IMR-90 (cell line): ENCODE measurements at regions of chr19 and their contacts with region 1.

Region 1: DNA sequence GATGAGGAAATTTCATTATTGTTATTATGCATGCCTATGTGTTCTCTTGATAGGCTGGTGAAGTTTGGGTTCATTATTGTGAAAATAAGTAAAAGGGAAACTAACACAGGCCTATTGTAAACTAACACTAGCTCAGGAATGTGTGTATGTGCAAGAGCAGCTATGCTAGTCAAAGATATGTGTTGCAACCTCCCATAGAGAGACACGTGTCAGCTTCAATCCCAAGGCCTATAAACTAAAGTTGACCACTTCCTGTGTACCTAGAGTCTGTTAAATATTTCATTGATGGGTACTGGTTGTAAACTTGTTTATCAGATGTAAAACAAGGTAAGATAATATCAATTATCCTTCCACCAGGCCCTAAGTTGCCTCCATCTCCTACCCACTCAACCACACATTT is 44.7 kb upstream of the ZNF30 start:
- DNase-seq: peak; percentile 24
- ATAC-seq: peak; percentile 64
- H3K4me3 ChIP-seq: no peak overlapping the region
- H3K27ac ChIP-seq: no peak overlapping the region
- H3K4me1 ChIP-seq: no peaks in the 10 kb centered on the region
- H3K27me3 ChIP-seq: no peaks in the 10 kb centered on the region
- CTCF ChIP-seq: no peak
- POLR2A ChIP-seq: no peak
- RAD21 ChIP-seq: no peak

Region 2: DNA sequence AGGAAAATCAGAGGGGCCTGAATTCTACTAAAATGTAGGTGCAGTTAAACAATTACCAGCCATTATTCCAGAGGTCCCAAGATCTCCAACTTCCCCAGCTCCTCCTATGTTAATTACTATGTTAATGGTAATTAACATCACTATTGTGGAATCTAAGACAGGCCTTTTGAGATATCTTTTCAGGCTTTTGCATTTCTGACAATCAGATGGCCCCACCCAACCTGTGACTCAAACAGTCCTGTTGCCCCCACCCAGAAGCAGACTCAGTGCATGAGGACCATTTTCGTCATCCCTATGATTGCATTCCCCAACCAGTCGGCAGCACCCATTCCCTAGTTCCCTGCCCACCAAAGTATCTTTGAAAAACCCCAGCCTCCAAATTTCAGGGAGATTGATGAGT is 36.2 kb after region 1 on chr19:
- CTCF ChIA-PET with region 1: no interaction called
- POLR2A ChIA-PET with region 1: no interaction called
- dilution Hi-C with region 1: no loop called
- in situ Hi-C with region 1: no loop called
- intact Hi-C with region 1: loop called (anchors 5 kb)
- DNase-seq: no peak
- ATAC-seq: no peak
- H3K4me3 ChIP-seq: no peak overlapping the region
- H3K27ac ChIP-seq: no peak overlapping the region
- H3K4me1 ChIP-seq: no peaks in the 10 kb centered on the region
- H3K27me3 ChIP-seq: no peaks in the 10 kb centered on the region
- CTCF ChIP-seq: no peak
- POLR2A ChIP-seq: no peak
- RAD21 ChIP-seq: no peak

Region 3: GRCh38 chr19:34932494-34932893 is 50.5 kb after region 1 on chr19:
- CTCF ChIA-PET with region 1: no interaction called
- POLR2A ChIA-PET with region 1: no interaction called
- dilution Hi-C with region 1: no loop called
- in situ Hi-C with region 1: no loop called
- intact Hi-C with region 1: no loop called
- DNase-seq: no peak
- ATAC-seq: no peak
- H3K4me3 ChIP-seq: no peak overlapping the region
- H3K27ac ChIP-seq: no peak overlapping the region
- H3K4me1 ChIP-seq: no peaks in the 10 kb centered on the region
- H3K27me3 ChIP-seq: no peaks in the 10 kb centered on the region
- CTCF ChIP-seq: no peak
- POLR2A ChIP-seq: no peak
- RAD21 ChIP-seq: no peak